ENCODE measurements at regions of chr4 and their contacts with region 1.

Region 1: GRCh38 chr4:176563591-176563990 is 229.1 kb downstream of the VEGFC start:
- DNase-seq: no peak
- ATAC-seq: no peak

Region 2: DNA sequence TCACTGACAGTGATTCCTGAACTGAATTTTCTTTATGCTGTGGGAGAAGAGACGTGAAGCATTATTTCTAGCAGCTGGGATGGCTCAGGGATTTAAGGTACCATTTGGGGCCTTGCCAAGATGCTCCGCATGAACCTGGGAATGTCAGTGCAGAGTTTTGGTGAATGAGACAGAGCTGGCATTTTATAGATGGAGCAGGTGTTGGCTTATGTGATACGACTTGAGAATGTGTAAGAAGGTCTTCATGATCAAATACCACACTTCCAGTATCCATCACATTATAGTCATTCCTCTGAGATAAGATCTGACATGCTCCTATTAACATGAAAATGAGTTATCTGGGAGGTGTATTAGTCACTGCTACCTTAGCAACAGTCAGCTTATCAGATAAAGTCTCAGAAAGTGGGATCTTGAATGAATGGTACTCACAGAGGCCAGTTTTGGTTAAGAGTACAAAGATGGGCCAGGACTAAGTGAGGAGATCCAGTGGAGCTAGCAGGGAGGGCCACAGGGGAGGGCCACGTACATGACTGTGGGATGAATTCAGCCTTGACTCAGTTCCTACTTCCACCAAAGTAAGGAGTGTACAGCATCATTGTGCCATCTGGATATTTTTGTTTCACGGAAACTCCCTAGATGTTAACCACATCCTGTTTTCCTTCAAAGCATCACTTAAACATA is 127.2 kb before region 1 on chr4:
- intact Hi-C with region 1: no loop called
- DNase-seq: no peak
- ATAC-seq: no peak

Region 3: DNA sequence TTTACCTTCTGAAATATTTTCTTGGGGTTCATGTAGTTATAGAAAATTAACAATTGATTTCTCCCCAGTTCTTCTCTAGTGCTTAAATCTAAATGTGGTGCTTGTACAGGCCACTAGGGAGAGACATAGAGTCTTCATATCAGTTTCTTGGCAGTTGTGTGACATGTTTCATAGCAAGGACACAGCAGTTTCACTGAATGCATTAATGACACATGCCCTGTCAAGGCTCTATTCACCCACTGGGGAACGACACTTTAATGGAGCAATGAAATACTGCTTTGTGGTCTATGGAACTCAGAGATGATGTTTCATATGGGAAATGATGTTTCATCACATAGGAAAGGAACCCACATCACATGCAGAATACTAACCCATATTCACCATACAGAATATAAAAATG is 226.4 kb after region 1 on chr4:
- intact Hi-C with region 1: loop called (anchors 10 kb)
- DNase-seq: no peak
- ATAC-seq: peak; percentile 31

Region 4: GRCh38 chr4:177047070-177047850 is 483.7 kb after region 1 on chr4:
- intact Hi-C with region 1: loop called (anchors 10 kb)
- DNase-seq: peak; percentile 36
- ATAC-seq: peak; percentile 75

Region 5: DNA sequence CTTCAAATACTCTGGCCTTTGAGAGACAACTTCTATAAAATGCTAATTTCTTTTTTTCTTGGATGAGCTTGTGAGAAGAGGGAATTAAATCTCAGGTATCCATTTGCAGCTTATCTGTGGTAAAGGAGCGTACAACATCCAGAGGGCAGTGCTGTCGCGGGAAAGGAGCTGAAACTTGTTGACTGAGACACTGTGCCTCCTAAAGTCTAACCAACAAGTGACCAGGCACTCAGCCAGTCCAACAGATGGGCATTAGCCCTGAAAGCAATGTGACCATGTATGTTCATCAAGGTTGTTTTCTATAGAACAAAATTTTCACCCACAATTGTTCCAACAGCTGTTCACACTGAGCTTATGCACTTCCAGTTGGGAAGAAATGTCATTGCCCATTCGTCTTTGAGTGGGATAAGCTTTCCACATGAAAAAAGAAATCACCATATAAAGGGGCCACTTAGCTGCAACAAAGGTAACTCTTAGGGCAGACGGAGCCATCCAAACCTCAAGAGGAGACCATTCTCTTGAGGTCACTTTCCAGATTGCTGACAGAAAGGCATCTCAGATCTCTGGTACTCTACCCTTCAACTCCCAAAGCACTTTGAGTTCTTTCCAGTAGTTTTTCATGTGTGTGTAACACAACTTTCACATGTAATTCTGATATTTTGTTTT is 501.3 kb after region 1 on chr4:
- intact Hi-C with region 1: no loop called
- DNase-seq: no peak
- ATAC-seq: no peak